Activated CD4-positive, alpha-beta T cell treated with anti-CD3 and anti-CD28 coated beads for 36 hours (primary cell): ENCODE measurements at regions of chr20 and their contacts with region 1.

Region 1: GRCh38 chr20:45436732-45437391 is 20.9 kb downstream of the PIGT start:
- DNase-seq: peak; percentile 91
- ATAC-seq: peak; percentile 99
- H3K4me3 Mint-ChIP-seq: peak overlapping the region; percentile 69
- H3K27ac Mint-ChIP-seq: no peak overlapping the region
- H3K4me1 Mint-ChIP-seq: peaks cover 17% of the 10 kb centered on the region
- H3K27me3 Mint-ChIP-seq: no peaks in the 10 kb centered on the region

Region 2: DNA sequence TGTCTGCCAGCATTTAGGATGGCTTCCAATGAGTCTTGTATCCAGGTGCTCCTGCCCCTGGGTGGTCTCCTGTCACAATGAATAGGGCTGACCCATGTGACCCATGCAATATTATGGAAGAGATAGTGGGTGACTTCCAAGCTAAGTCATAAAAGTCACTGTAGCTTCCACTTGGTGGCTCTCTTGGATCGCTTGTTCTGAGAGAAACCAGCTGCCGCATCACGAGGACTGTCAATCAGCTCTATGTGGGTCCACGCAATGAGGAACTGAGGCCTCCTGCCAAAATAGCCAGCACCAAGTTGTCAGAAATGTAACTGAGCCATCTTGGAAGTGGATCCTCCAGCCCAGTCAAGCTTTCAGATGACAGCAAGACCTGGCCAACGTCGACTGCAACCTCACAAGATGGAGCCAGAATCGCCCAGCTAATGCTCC is 113.9 kb before region 1 on chr20:
- CTCF ChIA-PET with region 1: interaction called, 73 read pairs
- POLR2A ChIA-PET with region 1: no interaction called
- intact Hi-C with region 1: loop called (anchors 1 kb)
- DNase-seq: no peak
- ATAC-seq: no peak
- H3K4me3 Mint-ChIP-seq: no peak overlapping the region
- H3K27ac Mint-ChIP-seq: no peak overlapping the region
- H3K4me1 Mint-ChIP-seq: peaks cover 24% of the 10 kb centered on the region
- H3K27me3 Mint-ChIP-seq: no peaks in the 10 kb centered on the region

Region 3: GRCh38 chr20:45347936-45348778 is 88.7 kb before region 1 on chr20 and contains the start of gene SDC4:
- CTCF ChIA-PET with region 1: interaction called, 11 read pairs
- POLR2A ChIA-PET with region 1: interaction called, 6 read pairs
- intact Hi-C with region 1: no loop called
- DNase-seq: peak; percentile 79
- ATAC-seq: peak; percentile 81
- H3K4me3 Mint-ChIP-seq: peak within 1 kb of the TSS; percentile 82
- H3K27ac Mint-ChIP-seq: peak within 1 kb of the TSS; percentile 81
- H3K4me1 Mint-ChIP-seq: peaks cover 44% of the 10 kb centered on the region
- H3K27me3 Mint-ChIP-seq: peaks cover 3% of the 10 kb centered on the region
- total RNA-seq, gene SDC4: 24.0 to 31.0 TPM

Region 4: DNA sequence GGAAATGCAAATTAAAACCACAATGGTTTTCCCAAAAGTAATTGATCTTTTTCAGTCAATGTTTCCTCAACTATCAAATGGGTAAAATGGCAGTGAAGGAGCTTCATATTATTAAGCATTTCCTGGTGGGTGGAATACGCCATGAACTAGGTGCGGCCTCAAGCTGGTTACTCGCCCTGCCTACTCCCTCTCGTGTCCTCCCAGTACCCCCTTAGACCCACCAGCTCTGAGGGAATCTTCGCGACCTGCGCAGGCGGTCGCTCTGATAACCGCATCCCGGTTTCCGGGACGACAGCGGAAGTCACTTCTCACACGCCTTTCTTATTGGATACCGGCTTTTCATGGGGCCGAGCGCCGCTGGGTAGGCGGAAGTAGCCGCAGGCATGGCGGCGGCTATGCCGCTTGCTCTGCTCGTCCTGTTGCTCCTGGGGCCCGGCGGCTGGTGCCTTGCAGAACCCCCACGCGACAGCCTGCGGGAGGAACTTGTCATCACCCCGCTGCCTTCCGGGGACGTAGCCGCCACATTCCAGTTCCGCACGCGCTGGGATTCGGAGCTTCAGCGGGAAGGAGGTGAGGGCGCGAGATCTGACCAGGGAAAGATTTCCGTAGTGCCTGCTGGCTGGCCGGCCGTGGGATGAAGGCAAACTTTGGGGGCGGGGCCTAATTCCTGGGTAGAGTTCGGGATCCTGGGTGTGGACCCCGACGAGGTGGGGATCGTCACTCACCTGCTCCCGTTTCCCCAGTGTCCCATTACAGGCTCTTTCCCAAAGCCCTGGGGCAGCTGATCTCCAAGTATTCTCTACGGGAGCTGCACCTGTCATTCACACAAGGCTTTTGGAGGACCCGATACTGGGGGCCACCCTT is 20.9 kb before region 1 on chr20 and contains the start of gene PIGT:
- CTCF ChIA-PET with region 1: interaction called, 43 read pairs
- POLR2A ChIA-PET with region 1: no interaction called
- intact Hi-C with region 1: no loop called
- DNase-seq: peak; percentile 93
- ATAC-seq: peak; percentile 93
- H3K4me3 Mint-ChIP-seq: peak within 1 kb of the TSS; percentile 94
- H3K27ac Mint-ChIP-seq: peak within 1 kb of the TSS; percentile 97
- H3K4me1 Mint-ChIP-seq: peaks cover 44% of the 10 kb centered on the region
- H3K27me3 Mint-ChIP-seq: no peaks in the 10 kb centered on the region
- total RNA-seq, gene PIGT: 44.0 to 65.7 TPM

Region 5: DNA sequence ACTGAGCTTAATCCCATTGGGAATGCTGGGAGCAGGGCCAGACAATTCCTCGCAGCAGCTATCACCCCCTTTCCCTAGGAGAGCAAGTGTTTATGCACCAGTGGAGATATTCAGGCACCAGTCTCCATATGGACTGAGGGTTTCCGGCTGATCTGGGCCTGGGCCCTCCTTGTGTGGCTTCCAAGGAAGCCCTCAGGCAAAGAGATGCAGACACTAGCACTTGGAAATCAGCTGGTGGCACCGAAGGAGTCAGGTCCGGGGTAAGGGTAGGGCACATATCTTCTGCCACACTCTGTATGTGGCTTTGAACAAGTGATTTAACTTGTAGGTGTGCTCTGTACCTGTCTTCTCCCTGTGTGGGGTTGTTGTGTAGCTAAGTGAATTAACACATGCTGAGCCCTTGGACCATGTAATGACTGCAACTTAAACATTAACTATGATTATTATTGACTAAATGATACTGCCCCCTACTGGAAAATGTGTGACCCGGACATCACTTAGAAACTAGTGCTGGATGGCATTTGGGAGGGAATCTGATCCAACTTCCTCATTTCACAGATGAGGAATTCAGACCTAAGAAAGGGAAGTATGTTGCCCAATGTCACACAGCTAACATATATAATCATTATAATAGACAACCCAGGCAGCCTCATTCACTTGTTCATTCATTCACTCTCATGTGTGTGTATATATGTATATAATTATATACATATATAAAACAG is 13.4 kb after region 1 on chr20:
- CTCF ChIA-PET with region 1: interaction called, 48 read pairs
- POLR2A ChIA-PET with region 1: no interaction called
- intact Hi-C with region 1: no loop called
- DNase-seq: peak; percentile 24
- ATAC-seq: peak; percentile 53
- H3K4me3 Mint-ChIP-seq: no peak overlapping the region
- H3K27ac Mint-ChIP-seq: no peak overlapping the region
- H3K4me1 Mint-ChIP-seq: peaks cover 2% of the 10 kb centered on the region
- H3K27me3 Mint-ChIP-seq: peaks cover 4% of the 10 kb centered on the region

Region 6: GRCh38 chr20:45456632-45457031 is 19.8 kb after region 1 on chr20:
- CTCF ChIA-PET with region 1: interaction called, 48 read pairs
- POLR2A ChIA-PET with region 1: no interaction called
- intact Hi-C with region 1: no loop called
- DNase-seq: peak; percentile 75
- ATAC-seq: peak; percentile 81
- H3K4me3 Mint-ChIP-seq: no peak overlapping the region
- H3K27ac Mint-ChIP-seq: no peak overlapping the region
- H3K4me1 Mint-ChIP-seq: no peaks in the 10 kb centered on the region
- H3K27me3 Mint-ChIP-seq: peaks cover 2% of the 10 kb centered on the region

Region 7: GRCh38 chr20:45467861-45468260 is 31.0 kb after region 1 on chr20:
- CTCF ChIA-PET with region 1: interaction called, 13 read pairs
- POLR2A ChIA-PET with region 1: no interaction called
- intact Hi-C with region 1: no loop called
- DNase-seq: no peak
- ATAC-seq: no peak
- H3K4me3 Mint-ChIP-seq: no peak overlapping the region
- H3K27ac Mint-ChIP-seq: no peak overlapping the region
- H3K4me1 Mint-ChIP-seq: peaks cover 11% of the 10 kb centered on the region
- H3K27me3 Mint-ChIP-seq: peaks cover 46% of the 10 kb centered on the region